Endothelial cell of umbilical vein (primary cell): ENCODE measurements at regions of chr2 and their contacts with region 1.

Region 1: DNA sequence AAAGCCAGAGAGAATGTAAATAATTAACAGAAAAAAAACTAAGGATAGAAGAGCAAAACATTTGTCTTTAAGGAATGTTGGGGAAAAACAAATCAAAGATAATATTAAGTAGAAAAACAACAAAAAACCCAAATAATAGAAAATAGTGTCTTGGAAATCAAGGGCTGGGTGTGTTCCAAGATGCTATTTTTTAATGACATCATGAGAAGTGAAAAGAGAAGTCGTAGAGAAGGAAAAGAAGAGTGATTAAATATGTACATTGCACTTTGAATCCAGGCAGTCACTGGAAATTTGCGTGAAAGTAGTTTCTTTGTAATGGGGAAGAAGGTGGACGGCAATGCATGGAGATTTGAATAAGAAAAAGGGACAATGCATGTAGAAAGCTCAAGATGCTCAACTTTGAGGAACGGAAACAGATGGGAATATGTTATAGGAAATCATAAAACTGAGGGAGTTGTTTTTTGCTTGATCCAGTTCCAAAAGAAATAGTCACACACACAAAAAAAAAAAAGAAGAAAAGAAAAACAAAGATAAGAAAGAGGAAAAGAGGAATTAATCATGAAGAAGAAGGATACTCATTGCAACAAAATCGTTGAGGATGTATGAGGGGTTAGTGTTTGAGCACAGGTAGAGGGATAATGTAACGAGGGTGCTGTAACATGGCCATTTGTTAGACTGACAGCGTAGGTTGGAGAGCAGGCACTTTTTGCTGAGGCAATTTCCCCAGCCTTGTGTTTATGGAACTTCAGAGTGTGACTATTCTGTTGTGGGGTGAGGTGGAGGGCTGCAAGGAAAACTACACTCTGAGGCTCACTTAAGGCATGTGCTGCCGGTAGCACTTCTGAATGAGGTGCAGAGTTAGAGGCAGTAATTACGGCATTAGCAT is 184.1 kb downstream of the CALCRL start:
- DNase-seq: peak; percentile 94
- H3K4me3 ChIP-seq: peak overlapping the region in 2 of 3 experiments; percentile 9 to 45
- H3K27ac ChIP-seq: peak overlapping the region; percentile 96
- H3K4me1 ChIP-seq: peaks cover 36% of the 10 kb centered on the region
- H3K27me3 ChIP-seq: no peaks in the 10 kb centered on the region
- CTCF ChIP-seq: no peak
- POLR2A ChIP-seq: peak; percentile 92

Region 2: GRCh38 chr2:186884587-186884986 is 379.3 kb before region 1 on chr2:
- CTCF ChIA-PET with region 1: no interaction called
- POLR2A ChIA-PET with region 1: no interaction called
- dilution Hi-C with region 1: no loop called
- intact Hi-C with region 1: loop called (anchors 1 kb)
- DNase-seq: peak; percentile 98
- H3K4me3 ChIP-seq: no peak overlapping the region
- H3K27ac ChIP-seq: peak overlapping the region; percentile 71
- H3K4me1 ChIP-seq: peaks cover 55% of the 10 kb centered on the region
- H3K27me3 ChIP-seq: no peaks in the 10 kb centered on the region
- CTCF ChIP-seq: no peak
- POLR2A ChIP-seq: peak; percentile 86

Region 3: GRCh38 chr2:187138265-187138664 is 125.7 kb before region 1 on chr2:
- CTCF ChIA-PET with region 1: interaction called, 5 read pairs
- POLR2A ChIA-PET with region 1: interaction called, 3 read pairs
- dilution Hi-C with region 1: no loop called
- intact Hi-C with region 1: loop called (anchors 1 kb)
- DNase-seq: peak; percentile 81
- H3K4me3 ChIP-seq: no peak overlapping the region
- H3K27ac ChIP-seq: peak overlapping the region; percentile 1
- H3K4me1 ChIP-seq: peaks cover 30% of the 10 kb centered on the region
- H3K27me3 ChIP-seq: no peaks in the 10 kb centered on the region
- CTCF ChIP-seq: peak; percentile 70 to 80
- POLR2A ChIP-seq: no peak

Region 4: GRCh38 chr2:187206071-187206470 is 57.8 kb before region 1 on chr2:
- CTCF ChIA-PET with region 1: no interaction called
- POLR2A ChIA-PET with region 1: no interaction called
- dilution Hi-C with region 1: no loop called
- intact Hi-C with region 1: loop called (anchors 1 kb)
- DNase-seq: peak; percentile 89
- H3K4me3 ChIP-seq: no peak overlapping the region
- H3K27ac ChIP-seq: peak overlapping the region; percentile 39
- H3K4me1 ChIP-seq: peaks cover 13% of the 10 kb centered on the region
- H3K27me3 ChIP-seq: no peaks in the 10 kb centered on the region
- CTCF ChIP-seq: no peak
- POLR2A ChIP-seq: no peak

Region 5: GRCh38 chr2:187319441-187320108 is 55.7 kb after region 1 on chr2:
- CTCF ChIA-PET with region 1: no interaction called
- POLR2A ChIA-PET with region 1: interaction called, 8 read pairs
- dilution Hi-C with region 1: no loop called
- intact Hi-C with region 1: loop called (anchors 1 kb)
- DNase-seq: peak; percentile 96
- H3K4me3 ChIP-seq: peak overlapping the region in 1 of 3 experiments; percentile 3
- H3K27ac ChIP-seq: peak overlapping the region; percentile 94
- H3K4me1 ChIP-seq: peaks cover 47% of the 10 kb centered on the region
- H3K27me3 ChIP-seq: no peaks in the 10 kb centered on the region
- CTCF ChIP-seq: no peak
- POLR2A ChIP-seq: no peak

Region 6: DNA sequence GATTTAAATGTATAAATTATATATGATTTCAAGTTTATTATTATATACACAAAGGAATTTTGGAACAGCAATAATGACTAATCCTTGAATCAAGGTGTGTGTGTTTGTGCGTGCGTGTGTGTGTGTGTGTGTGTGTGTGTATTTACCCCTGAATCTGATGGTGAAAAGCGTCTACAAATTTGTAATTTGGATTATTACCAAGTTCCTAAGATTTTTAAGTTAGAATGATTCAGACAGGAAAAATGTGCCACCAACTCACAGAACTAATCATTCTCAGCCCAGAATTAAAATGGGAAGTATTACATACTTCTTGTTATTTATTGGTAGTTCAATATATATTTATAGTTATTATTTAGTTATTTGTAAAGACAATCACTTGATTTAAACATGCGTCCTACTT is 171.8 kb after region 1 on chr2:
- CTCF ChIA-PET with region 1: no interaction called
- POLR2A ChIA-PET with region 1: no interaction called
- dilution Hi-C with region 1: no loop called
- intact Hi-C with region 1: loop called (anchors 2 kb)
- DNase-seq: no peak
- H3K4me3 ChIP-seq: no peak overlapping the region
- H3K27ac ChIP-seq: peak overlapping the region; percentile 79
- H3K4me1 ChIP-seq: peaks cover 100% of the 10 kb centered on the region
- H3K27me3 ChIP-seq: no peaks in the 10 kb centered on the region
- CTCF ChIP-seq: no peak
- POLR2A ChIP-seq: no peak

Region 7: DNA sequence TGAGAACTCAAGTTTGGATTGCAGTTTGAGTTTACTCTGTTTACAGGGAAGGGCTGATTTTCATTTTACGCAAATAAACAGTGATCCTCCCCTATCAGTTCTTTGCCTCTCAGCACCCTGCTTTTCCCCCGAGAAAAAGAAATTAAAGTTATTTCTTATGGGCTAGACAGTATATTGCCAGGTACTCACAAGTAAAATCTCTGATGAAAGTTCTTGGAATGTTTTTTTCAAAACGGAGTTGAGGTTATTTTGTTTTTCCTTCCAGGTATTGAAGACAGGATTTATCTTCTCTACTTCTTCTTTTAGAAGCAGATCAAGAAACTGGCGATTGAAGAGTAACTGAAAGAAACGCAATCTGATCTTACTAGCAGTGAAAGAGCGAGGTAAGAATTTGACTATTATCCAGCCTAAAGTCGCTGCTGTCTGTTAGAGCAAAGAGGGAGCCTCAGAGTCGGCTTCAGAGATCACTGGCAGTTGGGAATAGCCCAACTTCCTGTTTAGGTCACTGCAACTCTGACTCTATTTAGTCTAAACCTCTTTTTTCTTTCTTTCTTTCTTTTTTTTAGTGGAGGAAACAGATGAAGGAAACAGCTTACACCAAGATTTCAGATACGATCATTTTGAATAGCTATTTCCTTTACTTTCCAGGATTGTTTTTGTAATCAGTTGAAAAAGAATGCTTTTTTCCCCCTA is 290.2 kb after region 1 on chr2 and contains the start of gene TFPI:
- CTCF ChIA-PET with region 1: no interaction called
- POLR2A ChIA-PET with region 1: no interaction called
- dilution Hi-C with region 1: no loop called
- intact Hi-C with region 1: loop called (anchors 5 kb)
- DNase-seq: peak; percentile 93
- H3K4me3 ChIP-seq: peak within 1 kb of the TSS; percentile 82 to 95 (median 87)
- H3K27ac ChIP-seq: peak within 1 kb of the TSS; percentile 87
- H3K4me1 ChIP-seq: peaks cover 36% of the 10 kb centered on the region
- H3K27me3 ChIP-seq: no peaks in the 10 kb centered on the region
- CTCF ChIP-seq: no peak
- POLR2A ChIP-seq: peak; percentile 97
- total RNA-seq, gene TFPI: 266 and 286 TPM in 2 replicates